Activated CD4-positive, alpha-beta T cell treated with anti-CD3 and anti-CD28 coated beads for 36 hours (primary cell): ENCODE measurements at regions of chr16 and their contacts with region 1.

Region 1: DNA sequence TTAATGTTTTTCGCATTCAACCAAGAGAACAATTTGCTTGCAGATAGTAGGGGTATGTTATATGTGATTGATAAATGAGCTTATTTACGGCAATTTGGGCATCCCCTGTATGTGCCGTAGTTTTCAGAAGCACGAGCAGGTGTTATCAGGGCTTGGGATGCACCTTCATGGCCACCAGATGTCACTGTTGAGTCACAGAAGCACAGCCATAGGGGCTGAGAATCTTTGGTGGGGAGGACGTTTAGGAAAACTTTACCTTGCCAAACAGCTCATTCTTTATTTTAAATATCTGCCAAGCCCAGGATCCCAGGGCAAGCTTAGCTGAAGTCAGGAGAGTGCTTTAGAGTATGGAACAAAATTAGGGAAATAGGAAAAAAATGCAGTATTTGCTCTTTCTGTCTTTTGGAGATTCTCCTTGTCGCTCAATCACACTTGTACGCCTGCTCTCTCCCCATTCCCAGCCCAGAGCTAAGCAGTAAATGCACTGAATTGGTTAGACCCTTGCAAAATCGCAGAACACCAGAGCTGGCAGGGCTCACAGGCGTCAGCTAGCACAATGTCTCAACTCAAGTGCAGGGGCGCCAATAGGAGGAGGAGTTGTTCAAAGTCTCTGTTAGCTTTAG is 93.6 kb upstream of the MPHOSPH6 start:
- DNase-seq: peak; percentile 69
- ATAC-seq: peak; percentile 80
- H3K4me3 Mint-ChIP-seq: no peak overlapping the region
- H3K27ac Mint-ChIP-seq: no peak overlapping the region
- H3K4me1 Mint-ChIP-seq: no peaks in the 10 kb centered on the region
- H3K27me3 Mint-ChIP-seq: peaks cover 32% of the 10 kb centered on the region

Region 2: DNA sequence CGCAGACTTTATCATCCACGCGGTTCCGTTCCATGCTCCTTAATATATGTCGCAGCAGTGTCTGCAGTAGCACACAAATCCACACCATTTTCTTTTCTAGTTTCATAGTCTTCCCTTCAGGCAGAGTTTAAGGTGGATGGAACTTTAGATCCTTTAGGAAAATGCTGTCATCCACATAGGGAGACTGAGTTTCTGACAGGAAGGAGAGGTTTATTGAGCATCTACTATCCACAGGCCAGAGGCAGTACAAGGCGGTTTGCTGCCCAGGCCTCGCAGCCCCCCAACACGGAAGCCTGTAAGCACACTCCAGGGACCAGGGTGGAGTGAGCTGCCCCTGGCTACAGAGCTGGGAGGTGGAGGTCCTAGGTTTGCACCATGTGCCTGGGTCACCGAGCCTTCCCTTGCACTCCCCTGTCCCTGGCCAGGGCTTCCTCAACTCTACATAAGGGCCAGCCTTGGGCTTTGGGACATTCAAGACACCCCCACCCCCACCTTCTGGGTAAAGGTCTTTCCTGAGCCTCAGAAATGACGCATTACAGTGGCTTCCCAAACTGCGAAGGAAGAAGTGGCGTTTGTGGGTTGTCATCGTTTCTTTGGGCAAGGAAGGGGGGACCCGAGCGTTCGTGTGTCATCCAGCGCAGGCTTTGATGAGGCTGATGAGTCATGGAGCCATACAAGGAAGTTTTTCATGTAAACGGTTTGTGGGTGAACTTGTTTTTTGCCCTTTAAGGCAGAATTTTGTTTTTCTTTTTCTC is 631.1 kb before region 1 on chr16:
- CTCF ChIA-PET with region 1: no interaction called
- POLR2A ChIA-PET with region 1: no interaction called
- intact Hi-C with region 1: no loop called
- DNase-seq: peak; percentile 90
- ATAC-seq: peak; percentile 81
- H3K4me3 Mint-ChIP-seq: peak overlapping the region; percentile 47
- H3K27ac Mint-ChIP-seq: peak overlapping the region; percentile 97
- H3K4me1 Mint-ChIP-seq: peaks cover 67% of the 10 kb centered on the region
- H3K27me3 Mint-ChIP-seq: no peaks in the 10 kb centered on the region

Region 3: DNA sequence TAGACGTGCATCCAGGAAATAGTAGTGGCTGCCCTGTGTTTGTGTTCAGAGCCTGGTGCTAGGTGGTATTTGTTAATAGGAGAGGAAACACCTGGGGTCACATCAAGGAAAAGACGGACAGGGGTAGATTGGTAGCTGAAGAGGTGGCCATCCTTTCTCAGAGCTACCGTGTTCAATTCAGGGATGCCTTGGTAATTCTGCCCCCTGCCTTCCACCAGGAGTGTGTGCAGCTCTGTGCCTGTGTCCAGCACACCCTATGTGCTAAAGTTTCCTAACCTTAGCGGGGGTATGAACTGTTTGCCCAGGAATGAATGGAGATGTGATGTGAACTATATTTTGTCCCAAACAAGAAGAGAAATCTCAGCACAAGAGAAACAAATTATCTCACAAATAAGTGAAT is 80.5 kb after region 1 on chr16:
- CTCF ChIA-PET with region 1: interaction called, 3 read pairs
- POLR2A ChIA-PET with region 1: no interaction called
- intact Hi-C with region 1: loop called in 1 of 2 experiments (anchors 2 kb)
- DNase-seq: peak; percentile 8
- ATAC-seq: no peak
- H3K4me3 Mint-ChIP-seq: no peak overlapping the region
- H3K27ac Mint-ChIP-seq: no peak overlapping the region
- H3K4me1 Mint-ChIP-seq: no peaks in the 10 kb centered on the region
- H3K27me3 Mint-ChIP-seq: peaks cover 14% of the 10 kb centered on the region

Region 4: DNA sequence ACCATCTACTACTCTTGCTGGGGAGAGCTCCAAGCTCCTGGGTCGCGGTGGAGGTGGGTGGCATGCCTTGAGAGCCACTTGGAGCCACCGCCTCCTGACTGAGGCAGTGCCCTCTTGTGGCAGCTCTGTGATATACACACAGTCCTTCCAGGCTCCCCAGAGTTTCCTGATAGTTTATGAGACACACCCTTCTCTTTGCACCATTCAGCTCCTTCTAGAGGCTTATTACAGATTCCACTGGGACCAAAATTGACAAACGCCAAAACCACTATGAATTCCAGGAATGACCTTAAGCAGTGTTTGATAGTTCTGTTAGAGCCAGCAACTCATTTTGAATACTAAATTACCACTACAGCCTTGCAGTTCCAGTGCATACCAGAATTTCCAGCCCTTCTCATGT is 193.1 kb after region 1 on chr16:
- CTCF ChIA-PET with region 1: interaction called, 17 read pairs
- POLR2A ChIA-PET with region 1: no interaction called
- intact Hi-C with region 1: loop called (anchors 1 to 2 kb)
- DNase-seq: peak; percentile 70
- ATAC-seq: peak; percentile 70
- H3K4me3 Mint-ChIP-seq: no peak overlapping the region
- H3K27ac Mint-ChIP-seq: no peak overlapping the region
- H3K4me1 Mint-ChIP-seq: no peaks in the 10 kb centered on the region
- H3K27me3 Mint-ChIP-seq: peaks cover 7% of the 10 kb centered on the region

Region 5: DNA sequence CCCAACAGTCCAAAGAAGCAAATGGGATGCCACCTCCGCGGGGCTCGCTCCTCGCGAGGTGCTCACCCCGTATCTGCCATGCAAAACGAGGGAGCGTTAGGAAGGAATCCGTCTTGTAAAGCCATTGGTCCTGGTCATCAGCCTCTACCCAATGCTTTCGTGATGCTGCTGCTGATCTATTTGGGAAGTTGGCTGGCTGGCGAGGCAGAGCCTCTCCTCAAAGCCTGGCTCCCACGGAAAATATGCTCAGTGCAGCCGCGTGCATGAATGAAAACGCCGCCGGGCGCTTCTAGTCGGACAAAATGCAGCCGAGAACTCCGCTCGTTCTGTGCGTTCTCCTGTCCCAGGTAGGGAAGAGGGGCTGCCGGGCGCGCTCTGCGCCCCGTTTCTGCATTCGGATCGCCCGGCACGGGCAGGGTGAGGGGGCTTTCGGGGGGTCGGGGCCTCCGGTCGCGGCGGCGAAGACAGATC is 363.2 kb after region 1 on chr16 and contains the start of gene CDH13:
- CTCF ChIA-PET with region 1: no interaction called
- POLR2A ChIA-PET with region 1: no interaction called
- intact Hi-C with region 1: loop called in 1 of 2 experiments (anchors 10 kb)
- DNase-seq: no peak
- ATAC-seq: no peak
- H3K4me3 Mint-ChIP-seq: no peak within 1 kb of the TSS
- H3K27ac Mint-ChIP-seq: no peak within 1 kb of the TSS
- H3K4me1 Mint-ChIP-seq: peaks cover 2% of the 10 kb centered on the region
- H3K27me3 Mint-ChIP-seq: peaks cover 65% of the 10 kb centered on the region
- total RNA-seq, gene CDH13: not detected

Region 6: DNA sequence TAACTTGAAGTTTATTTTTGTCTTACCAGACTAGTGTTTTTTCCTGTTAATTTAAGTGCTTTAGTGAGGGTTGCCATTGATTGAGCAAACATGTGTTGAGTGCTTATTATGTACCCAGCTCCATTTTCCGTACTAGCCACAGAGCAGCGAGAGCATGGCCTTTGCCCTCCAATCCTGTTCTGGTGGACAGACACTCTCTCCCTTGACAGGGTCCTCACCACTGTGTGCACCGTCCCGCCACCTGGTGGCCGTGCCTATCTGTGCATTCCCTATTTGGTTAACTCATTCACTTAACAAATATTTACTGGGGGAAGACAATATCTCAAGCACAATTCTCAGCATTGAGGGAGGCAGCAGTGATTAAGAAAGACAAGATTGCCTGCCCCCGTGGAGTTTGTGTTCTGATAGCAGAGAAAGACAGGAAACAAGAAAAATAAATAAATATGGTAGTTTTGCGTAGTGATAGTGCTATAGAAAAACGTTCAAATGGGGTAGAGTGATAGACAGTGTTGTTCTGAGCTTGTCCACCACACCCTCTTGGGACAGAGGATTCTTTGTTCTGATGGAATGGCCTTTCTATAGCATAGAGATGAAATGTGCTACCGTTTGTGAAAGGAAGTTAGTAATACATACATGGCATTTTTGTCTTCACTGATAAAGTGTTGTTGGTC is 376.2 kb after region 1 on chr16:
- CTCF ChIA-PET with region 1: no interaction called
- POLR2A ChIA-PET with region 1: no interaction called
- intact Hi-C with region 1: loop called in 1 of 2 experiments (anchors 1 kb)
- DNase-seq: peak; percentile 78
- ATAC-seq: peak; percentile 47
- H3K4me3 Mint-ChIP-seq: no peak overlapping the region
- H3K27ac Mint-ChIP-seq: no peak overlapping the region
- H3K4me1 Mint-ChIP-seq: peaks cover 15% of the 10 kb centered on the region
- H3K27me3 Mint-ChIP-seq: peaks cover 5% of the 10 kb centered on the region

Region 7: DNA sequence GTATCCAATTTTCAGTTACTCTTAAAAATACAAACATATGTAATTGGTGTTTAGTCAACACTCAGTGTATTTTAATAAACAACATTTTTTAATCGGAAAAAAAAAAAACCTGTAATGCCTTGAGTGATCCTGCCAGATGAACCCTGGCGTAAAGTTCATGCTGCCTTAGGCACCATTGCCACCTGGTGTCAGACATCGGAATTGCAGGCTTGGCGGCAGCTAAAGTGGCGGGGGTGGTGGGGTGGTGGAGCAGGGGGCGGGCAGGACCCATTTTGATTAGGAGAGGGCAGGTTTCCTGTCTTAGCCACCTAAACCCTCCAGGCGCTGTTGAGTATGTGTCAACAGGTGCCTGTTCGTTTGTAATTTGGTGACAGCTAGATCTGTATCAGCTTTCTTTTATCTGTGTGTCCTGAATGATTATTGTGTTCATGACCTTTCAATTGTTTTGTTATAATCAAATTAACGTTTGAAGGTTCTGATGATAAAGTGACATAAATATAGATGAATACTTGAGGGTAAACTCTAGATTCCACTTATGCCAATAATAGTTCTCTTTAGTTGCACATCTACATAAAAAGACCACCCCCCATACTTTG is 951.9 kb after region 1 on chr16:
- CTCF ChIA-PET with region 1: interaction called, 11 read pairs
- POLR2A ChIA-PET with region 1: no interaction called
- intact Hi-C with region 1: loop called (anchors 1 kb)
- DNase-seq: peak; percentile 79
- ATAC-seq: peak; percentile 16
- H3K4me3 Mint-ChIP-seq: no peak overlapping the region
- H3K27ac Mint-ChIP-seq: no peak overlapping the region
- H3K4me1 Mint-ChIP-seq: no peaks in the 10 kb centered on the region
- H3K27me3 Mint-ChIP-seq: no peaks in the 10 kb centered on the region